ENCODE measurements at regions of chr4 and their contacts with region 1.

Region 1: GRCh38 chr4:128863312-128864075 is 54.0 kb downstream of the JADE1 start:
- DNase-seq: peak; percentile 57 to 91
- H3K4me3 ChIP-seq: no peak overlapping the region
- H3K27ac ChIP-seq: no peak overlapping the region
- H3K4me1 ChIP-seq: peaks cover 0 to 9% (median 5%) of the 10 kb centered on the region in 4 experiments; a peak in 6 of 7 replicates
- H3K27me3 ChIP-seq: no peaks in the 10 kb centered on the region
- CTCF ChIP-seq: peak; percentile 34 to 86 (median 65)
- EP300 ChIP-seq: no peak
- POLR2A ChIP-seq: peak in 1 of 2 experiments; percentile 66; a peak in 1 of 3 replicates
- RAD21 ChIP-seq: peak; percentile 65 to 70

Region 2: GRCh38 chr4:128793859-128794672 is 69.4 kb before region 1 on chr4:
- CTCF ChIA-PET with region 1: no interaction called
- POLR2A ChIA-PET with region 1: no interaction called
- DNase-seq: no peak
- H3K4me3 ChIP-seq: no peak overlapping the region
- H3K27ac ChIP-seq: no peak overlapping the region
- H3K4me1 ChIP-seq: peaks cover 0 to 5% (median 2%) of the 10 kb centered on the region in 4 experiments; a peak in 2 of 7 replicates
- H3K27me3 ChIP-seq: no peaks in the 10 kb centered on the region
- CTCF ChIP-seq: no peak
- EP300 ChIP-seq: no peak
- POLR2A ChIP-seq: no peak
- RAD21 ChIP-seq: no peak

Region 3: DNA sequence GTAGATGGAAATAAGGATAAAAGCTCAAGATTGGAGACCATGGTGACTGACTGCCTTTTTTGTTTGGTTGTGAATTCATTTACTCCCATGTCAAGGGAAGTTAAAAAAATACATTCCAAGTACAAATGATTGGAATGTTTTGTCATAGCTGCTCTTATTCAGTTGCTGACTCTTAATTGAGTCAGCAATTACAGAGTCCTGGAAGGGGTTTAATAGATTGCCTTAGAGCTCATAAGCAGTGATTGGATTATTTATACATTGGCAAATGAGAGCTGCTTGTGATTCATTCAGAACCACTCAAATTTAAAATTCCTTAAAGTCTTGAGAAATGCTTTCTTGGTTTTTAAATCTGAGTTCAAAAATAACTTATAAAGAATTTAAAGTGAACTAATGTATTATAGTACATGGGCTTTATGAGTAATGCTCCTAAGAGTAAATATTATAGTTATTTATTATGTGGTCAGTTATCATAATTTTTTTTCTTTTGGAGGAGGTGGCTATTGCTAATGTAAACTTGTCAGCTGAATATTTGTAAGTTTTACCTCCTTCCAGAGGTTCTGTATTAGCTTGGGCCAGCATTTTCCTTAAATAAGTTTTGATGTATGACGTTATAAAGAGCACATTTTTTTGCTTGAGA is 40.4 kb before region 1 on chr4:
- CTCF ChIA-PET with region 1: interaction called, 5 read pairs
- POLR2A ChIA-PET with region 1: interaction called, 204 read pairs
- DNase-seq: no peak
- H3K4me3 ChIP-seq: no peak overlapping the region
- H3K27ac ChIP-seq: no peak overlapping the region
- H3K4me1 ChIP-seq: peaks cover 6 to 37% (median 24%) of the 10 kb centered on the region in 4 experiments
- H3K27me3 ChIP-seq: no peaks in the 10 kb centered on the region
- CTCF ChIP-seq: no peak
- EP300 ChIP-seq: no peak
- POLR2A ChIP-seq: no peak
- RAD21 ChIP-seq: no peak

Region 4: DNA sequence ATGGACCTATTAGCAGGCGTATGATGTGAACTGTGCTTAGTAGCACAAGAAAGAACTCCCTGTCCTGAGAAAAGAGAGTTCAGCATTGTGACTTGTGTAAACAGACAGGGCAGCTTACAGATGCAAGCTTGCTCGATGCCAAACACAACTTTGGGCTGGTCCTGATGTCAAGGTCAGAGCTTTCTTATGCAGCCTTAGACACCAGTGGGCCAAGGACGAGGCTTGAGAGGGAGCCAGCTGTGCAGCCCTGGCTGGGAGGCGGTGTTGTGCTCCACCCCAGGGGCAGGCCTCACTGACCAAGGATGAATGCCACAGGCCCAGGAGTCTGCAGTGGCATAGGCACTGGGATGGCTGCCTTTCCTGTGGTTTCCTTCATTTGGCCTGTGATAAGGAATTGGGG is 18.6 kb before region 1 on chr4:
- CTCF ChIA-PET with region 1: interaction called, 11 read pairs
- POLR2A ChIA-PET with region 1: interaction called, 204 read pairs
- DNase-seq: no peak
- H3K4me3 ChIP-seq: no peak overlapping the region
- H3K27ac ChIP-seq: no peak overlapping the region
- H3K4me1 ChIP-seq: peaks cover 0 to 7% (median 0%) of the 10 kb centered on the region in 4 experiments; a peak in 4 of 7 replicates
- H3K27me3 ChIP-seq: no peaks in the 10 kb centered on the region
- CTCF ChIP-seq: no peak
- EP300 ChIP-seq: no peak
- POLR2A ChIP-seq: peak in 1 of 2 experiments; percentile 51; a peak in 1 of 3 replicates
- RAD21 ChIP-seq: no peak

Region 5: GRCh38 chr4:128979934-128980333 is 116.4 kb after region 1 on chr4:
- CTCF ChIA-PET with region 1: no interaction called
- POLR2A ChIA-PET with region 1: no interaction called
- DNase-seq: no peak
- H3K4me3 ChIP-seq: no peak overlapping the region
- H3K27ac ChIP-seq: no peak overlapping the region
- H3K4me1 ChIP-seq: no peaks in the 10 kb centered on the region
- H3K27me3 ChIP-seq: peaks cover 0 to 1% (median 0%) of the 10 kb centered on the region in 4 experiments; a peak in 1 of 7 replicates
- CTCF ChIP-seq: no peak
- EP300 ChIP-seq: no peak
- POLR2A ChIP-seq: no peak
- RAD21 ChIP-seq: no peak